Mucosa of descending colon (tissue), 3 donors: ENCODE measurements at regions of chr5 and their contacts with region 1.

Region 1: DNA sequence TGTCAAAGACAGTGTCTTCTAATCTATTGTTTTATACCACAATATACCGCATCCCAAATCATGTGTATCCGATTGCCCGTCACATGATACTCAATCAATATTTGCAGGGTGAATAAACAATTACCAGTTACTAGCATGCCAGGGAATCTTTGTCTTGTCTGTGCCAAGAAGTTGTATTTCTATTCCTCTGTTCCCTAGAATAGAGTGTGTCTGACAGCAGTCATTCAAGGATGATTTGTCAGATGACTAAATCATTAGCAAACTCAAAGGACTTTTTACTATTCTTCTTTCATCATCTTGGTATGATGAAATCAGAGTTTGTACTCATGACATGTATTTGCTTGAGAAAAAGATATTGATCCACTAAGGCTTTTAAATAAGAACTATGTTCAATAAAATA is 348.8 kb downstream of the HTR1A start:
- DNase-seq: no peak
- ATAC-seq: no peak
- H3K4me3 ChIP-seq: no peak overlapping the region
- H3K4me1 ChIP-seq: no peaks in the 10 kb centered on the region
- CTCF ChIP-seq: no peak

Region 2: DNA sequence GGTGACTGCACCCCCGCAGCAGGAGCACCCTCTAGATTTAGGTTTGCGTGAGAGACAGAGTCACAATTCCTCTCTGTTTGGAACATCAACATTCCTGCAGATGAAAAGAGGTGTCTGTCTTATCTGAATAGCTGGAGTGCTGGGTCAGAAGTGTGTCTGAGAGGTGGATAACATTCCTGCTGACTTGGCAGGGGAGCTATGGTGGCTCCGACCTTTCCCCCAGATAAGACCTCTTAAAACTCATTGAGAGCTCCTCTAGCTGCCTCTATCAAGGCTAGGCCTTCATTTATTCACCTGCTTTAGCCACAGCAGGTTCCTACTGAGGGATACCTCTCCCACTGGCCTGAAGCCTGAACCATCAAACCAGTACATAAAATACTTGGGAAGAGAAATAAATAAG is 419.3 kb before region 1 on chr5:
- intact Hi-C with region 1: loop called in 1 of 2 experiments (anchors 5 kb)
- DNase-seq: no peak
- ATAC-seq: no peak
- H3K4me3 ChIP-seq: no peak overlapping the region
- H3K4me1 ChIP-seq: no peaks in the 10 kb centered on the region
- CTCF ChIP-seq: no peak

Region 3: GRCh38 chr5:63697811-63698210 is 84.4 kb after region 1 on chr5:
- intact Hi-C with region 1: no loop called
- DNase-seq: no peak
- ATAC-seq: no peak
- H3K4me3 ChIP-seq: no peak overlapping the region
- H3K4me1 ChIP-seq: no peaks in the 10 kb centered on the region
- CTCF ChIP-seq: no peak